CD8-positive, alpha-beta T cell (primary cell): ENCODE measurements at regions of chr15 and their contacts with region 1.

Region 1: DNA sequence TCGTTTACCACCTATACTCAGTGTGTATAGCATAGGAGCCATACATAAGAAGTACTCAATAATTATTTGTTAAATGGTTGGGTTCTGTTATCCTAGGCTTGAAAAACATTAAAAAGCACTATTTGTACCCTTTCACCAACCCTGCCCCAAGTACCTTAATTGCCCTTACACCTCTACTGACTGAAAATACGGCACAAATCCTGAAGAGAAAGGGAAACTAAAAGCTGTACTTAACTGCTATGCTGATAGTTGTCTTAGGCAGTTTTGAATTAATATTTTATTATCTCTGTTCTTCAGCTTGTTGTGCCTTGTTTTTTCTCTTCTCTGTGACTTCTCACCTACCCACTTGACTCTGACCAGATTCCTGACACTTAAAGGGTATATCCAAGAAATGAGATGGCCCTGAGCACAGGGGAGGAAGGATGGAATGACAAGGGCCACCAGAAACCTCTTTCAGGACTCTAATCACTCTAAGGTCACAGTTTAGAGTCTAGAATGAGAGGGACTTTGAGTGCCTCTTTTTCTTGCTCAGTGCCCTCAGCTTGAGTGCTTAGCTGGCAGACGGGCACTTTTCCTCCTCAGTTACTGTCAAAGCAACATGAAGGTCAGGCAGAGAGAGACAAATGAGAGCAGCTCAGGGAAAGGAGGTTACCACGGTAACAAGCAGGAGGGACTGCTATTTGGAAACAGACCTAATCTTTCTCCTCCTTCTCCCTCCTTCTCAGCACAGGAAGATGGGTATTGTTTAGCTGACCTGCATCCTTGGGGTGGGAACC is 136.5 kb downstream of the ZNF609 start:
- DNase-seq: peak in 5 of 9 experiments; percentile 12 to 73 (median 27)
- ATAC-seq: peak; percentile 71
- H3K4me3 ChIP-seq: peak overlapping the region; percentile 36 to 38
- H3K4me3 Mint-ChIP-seq: peak overlapping the region; percentile 84
- H3K27ac ChIP-seq: peak overlapping the region; percentile 65 to 66
- H3K27ac Mint-ChIP-seq: peak overlapping the region; percentile 93
- H3K4me1 ChIP-seq: peaks cover 61% of the 10 kb centered on the region
- H3K4me1 Mint-ChIP-seq: peaks cover 67% of the 10 kb centered on the region
- H3K27me3 ChIP-seq: no peaks in the 10 kb centered on the region
- H3K27me3 Mint-ChIP-seq: no peaks in the 10 kb centered on the region
- CTCF ChIP-seq: no peak

Region 2: DNA sequence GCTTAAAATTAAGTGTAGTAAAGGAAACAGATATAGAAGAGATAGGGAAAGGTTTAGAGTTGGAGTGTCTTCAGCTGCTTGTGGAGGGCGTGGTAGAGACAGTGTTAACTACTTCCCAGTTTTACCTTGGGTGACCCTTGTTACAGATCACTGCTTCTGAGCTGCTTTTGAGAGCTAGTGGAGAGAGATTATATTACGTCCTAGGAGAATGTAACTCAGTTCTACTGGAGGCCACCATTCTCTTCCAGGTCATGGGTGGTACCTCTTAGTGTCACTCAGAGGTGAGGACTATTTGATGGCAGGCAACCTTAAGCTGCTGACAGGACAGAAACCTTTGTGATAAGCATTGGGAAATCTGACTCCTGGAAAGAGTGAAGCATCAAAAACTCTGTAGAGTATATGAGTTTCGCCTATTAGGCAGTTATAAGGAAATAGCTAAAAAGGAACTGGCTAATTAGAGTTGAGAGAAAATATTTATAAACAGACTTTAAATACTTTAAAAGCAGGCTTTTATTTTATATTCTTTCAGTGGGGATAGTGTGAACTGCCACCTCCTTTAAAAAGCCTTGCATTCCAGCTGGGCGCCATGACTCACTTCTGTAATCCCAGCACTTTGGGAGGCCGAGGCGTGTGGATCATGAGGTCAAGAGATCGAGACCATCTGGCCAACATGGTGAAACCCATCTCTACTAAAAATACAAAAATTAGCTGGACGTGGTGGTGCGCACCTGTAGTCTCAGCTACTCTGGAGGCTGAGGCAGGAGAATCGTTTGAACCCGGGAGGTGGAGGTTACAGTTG is 30.1 kb before region 1 on chr15:
- CTCF ChIA-PET with region 1: no interaction called
- POLR2A ChIA-PET with region 1: no interaction called
- intact Hi-C with region 1: loop called in 1 of 2 experiments (anchors 5 kb)
- DNase-seq: no peak
- ATAC-seq: no peak
- H3K4me3 ChIP-seq: no peak overlapping the region
- H3K4me3 Mint-ChIP-seq: no peak overlapping the region
- H3K27ac ChIP-seq: no peak overlapping the region
- H3K27ac Mint-ChIP-seq: peak overlapping the region; percentile 64
- H3K4me1 ChIP-seq: peaks cover 44% of the 10 kb centered on the region
- H3K4me1 Mint-ChIP-seq: peaks cover 68% of the 10 kb centered on the region
- H3K27me3 ChIP-seq: no peaks in the 10 kb centered on the region
- H3K27me3 Mint-ChIP-seq: no peaks in the 10 kb centered on the region
- CTCF ChIP-seq: no peak

Region 3: DNA sequence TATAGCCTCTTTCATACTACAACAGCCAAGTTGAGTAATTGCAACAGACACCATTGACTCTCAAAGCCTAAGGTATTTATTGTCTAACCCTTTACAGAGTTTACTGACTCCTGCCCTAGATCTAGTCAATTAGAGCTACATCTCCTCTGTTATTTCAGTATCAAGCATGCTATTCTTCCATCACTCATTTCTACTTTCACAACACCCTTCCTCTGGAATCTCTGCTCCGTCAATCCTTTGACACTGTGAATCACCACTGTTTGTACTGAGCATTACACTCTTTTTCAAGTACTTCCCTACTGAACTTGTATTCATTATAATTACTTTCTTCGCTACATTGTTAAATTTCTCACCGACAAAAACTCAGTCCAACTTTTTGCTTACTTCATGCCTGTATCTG is 14.7 kb before region 1 on chr15:
- CTCF ChIA-PET with region 1: interaction called, 3 read pairs
- POLR2A ChIA-PET with region 1: no interaction called
- intact Hi-C with region 1: loop called in 1 of 2 experiments (anchors 2 kb)
- DNase-seq: no peak
- ATAC-seq: no peak
- H3K4me3 ChIP-seq: no peak overlapping the region
- H3K4me3 Mint-ChIP-seq: no peak overlapping the region
- H3K27ac ChIP-seq: no peak overlapping the region
- H3K27ac Mint-ChIP-seq: peak overlapping the region; percentile 6
- H3K4me1 ChIP-seq: peaks cover 23% of the 10 kb centered on the region
- H3K4me1 Mint-ChIP-seq: peaks cover 43% of the 10 kb centered on the region
- H3K27me3 ChIP-seq: no peaks in the 10 kb centered on the region
- H3K27me3 Mint-ChIP-seq: no peaks in the 10 kb centered on the region
- CTCF ChIP-seq: no peak

Region 4: GRCh38 chr15:64622410-64623260 is 25.7 kb after region 1 on chr15:
- CTCF ChIA-PET with region 1: no interaction called
- POLR2A ChIA-PET with region 1: interaction called, 4 read pairs
- intact Hi-C with region 1: loop called in 1 of 2 experiments (anchors 2 kb)
- DNase-seq: peak; percentile 25 to 86 (median 60)
- ATAC-seq: peak; percentile 78
- H3K4me3 ChIP-seq: peak overlapping the region; percentile 26 to 29
- H3K4me3 Mint-ChIP-seq: peak overlapping the region; percentile 75
- H3K27ac ChIP-seq: peak overlapping the region; percentile 42 to 74
- H3K27ac Mint-ChIP-seq: peak overlapping the region; percentile 91
- H3K4me1 ChIP-seq: peaks cover 96% of the 10 kb centered on the region
- H3K4me1 Mint-ChIP-seq: peaks cover 95% of the 10 kb centered on the region
- H3K27me3 ChIP-seq: no peaks in the 10 kb centered on the region
- H3K27me3 Mint-ChIP-seq: no peaks in the 10 kb centered on the region
- CTCF ChIP-seq: no peak

Region 5: DNA sequence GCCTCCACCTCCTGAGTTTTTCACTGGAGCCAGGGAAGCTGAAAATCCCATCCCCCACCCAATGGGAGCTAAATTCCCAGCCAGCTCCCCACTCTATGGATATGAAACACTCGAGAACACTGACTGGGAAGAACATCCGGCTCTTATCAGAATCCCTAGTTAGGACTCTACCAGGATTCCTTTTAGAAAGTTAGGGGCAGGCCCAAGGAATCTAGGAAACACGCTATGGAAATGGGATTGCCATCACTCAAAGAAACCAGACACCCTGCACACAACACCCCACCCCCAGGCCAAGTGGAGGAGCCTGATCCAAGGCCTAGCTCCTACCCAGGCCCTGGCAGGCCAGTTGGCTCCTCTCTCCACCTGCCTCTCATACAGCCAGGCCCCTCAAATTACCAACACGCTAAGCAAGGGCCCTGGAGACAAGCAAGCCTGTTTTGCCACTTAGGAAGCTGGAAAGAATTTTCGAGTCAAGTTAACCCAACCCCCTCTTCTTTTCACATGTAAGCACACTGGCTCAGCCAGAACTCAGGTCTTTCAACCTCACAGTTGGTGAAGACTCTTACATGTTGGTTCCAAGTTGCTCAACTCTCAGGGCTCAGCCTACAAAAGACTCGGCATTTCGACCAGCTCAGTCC is 103.0 kb after region 1 on chr15:
- CTCF ChIA-PET with region 1: no interaction called
- POLR2A ChIA-PET with region 1: no interaction called
- intact Hi-C with region 1: no loop called
- DNase-seq: no peak
- ATAC-seq: no peak
- H3K4me3 ChIP-seq: no peak overlapping the region
- H3K4me3 Mint-ChIP-seq: peak overlapping the region; percentile 91
- H3K27ac ChIP-seq: no peak overlapping the region
- H3K27ac Mint-ChIP-seq: peak overlapping the region; percentile 49
- H3K4me1 ChIP-seq: peaks cover 53% of the 10 kb centered on the region
- H3K4me1 Mint-ChIP-seq: peaks cover 66% of the 10 kb centered on the region
- H3K27me3 ChIP-seq: no peaks in the 10 kb centered on the region
- H3K27me3 Mint-ChIP-seq: no peaks in the 10 kb centered on the region
- CTCF ChIP-seq: no peak